GM10248 (cell line): ENCODE measurements at regions of chr1 and their contacts with region 1.

Region 1: GRCh38 chr1:145720877-145721671 is 1.8 kb downstream of the CD160 start:
- DNase-seq: peak; percentile 82
- CTCF ChIP-seq: peak; percentile 93

Region 2: DNA sequence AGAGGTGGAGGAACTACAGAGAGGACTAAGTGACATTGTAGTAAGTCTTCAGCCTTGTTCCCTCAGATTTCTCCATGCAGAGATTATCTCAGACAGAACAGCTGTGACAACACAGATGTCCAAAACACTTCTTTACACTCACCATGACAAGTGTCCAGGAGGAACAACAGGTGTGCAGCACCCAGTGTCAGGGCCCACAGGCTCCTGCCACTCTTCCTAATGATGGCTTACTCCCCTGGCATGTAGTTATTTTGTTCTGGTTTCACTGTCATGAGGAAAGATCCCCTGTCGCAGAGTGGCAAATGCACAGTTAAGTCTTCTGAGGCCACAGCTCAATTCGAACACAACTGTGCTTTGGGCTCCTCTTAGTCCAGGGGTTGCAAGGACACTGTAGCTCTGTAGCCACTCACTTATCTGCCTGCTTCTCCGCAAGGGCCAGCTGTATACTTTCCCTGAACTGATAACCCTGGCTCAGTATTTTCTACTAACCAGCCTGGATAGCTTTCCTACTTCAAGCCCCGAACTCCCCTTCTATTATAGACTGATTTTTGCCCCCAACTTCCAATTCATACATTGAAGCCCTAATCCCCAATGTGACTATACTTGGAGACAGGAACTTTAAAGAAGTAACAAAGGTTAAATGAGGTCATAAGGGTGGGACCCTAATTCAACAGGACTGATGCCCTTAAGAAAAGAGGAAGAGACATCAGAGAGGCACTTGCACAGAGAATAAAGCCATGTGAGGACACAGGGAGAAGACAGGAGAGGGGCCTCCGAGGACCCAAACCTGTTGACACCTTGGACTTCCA is 25.0 kb before region 1 on chr1:
- CTCF ChIA-PET with region 1: interaction called, 14 read pairs
- POLR2A ChIA-PET with region 1: no interaction called
- DNase-seq: no peak
- CTCF ChIP-seq: no peak

Region 3: DNA sequence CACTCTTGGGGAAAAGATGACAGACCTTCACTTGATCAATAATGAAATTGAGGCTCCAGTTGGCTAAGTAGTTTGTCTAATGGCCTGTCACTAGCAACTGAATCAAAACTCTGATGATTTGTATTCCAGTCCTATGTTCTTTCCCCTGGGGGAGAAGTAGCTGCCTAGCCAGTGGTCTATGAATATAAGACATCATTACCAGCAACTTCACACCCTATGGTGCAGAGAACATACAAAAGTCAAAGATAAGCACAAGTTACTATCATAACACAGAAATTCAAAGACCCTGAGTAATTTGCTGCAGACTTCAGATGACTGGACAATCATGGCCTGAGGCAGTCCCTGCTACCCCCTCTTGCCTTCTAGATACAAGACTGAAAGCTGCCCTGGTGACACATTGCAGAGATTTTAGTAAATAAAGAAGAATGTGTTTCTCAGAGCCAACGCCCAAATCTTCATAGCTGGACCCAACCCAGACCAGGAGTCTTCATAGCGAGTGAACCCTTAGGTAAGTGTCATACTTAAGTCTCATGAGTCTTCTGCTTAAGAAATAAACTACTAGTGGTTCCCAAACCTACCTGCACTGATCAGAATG is 14.9 kb before region 1 on chr1:
- CTCF ChIA-PET with region 1: interaction called, 59 read pairs
- POLR2A ChIA-PET with region 1: no interaction called
- DNase-seq: no peak
- CTCF ChIP-seq: no peak

Region 4: GRCh38 chr1:145736191-145736590 is 15.1 kb after region 1 on chr1:
- CTCF ChIA-PET with region 1: interaction called, 39 read pairs
- POLR2A ChIA-PET with region 1: no interaction called
- DNase-seq: no peak
- CTCF ChIP-seq: no peak

Region 5: DNA sequence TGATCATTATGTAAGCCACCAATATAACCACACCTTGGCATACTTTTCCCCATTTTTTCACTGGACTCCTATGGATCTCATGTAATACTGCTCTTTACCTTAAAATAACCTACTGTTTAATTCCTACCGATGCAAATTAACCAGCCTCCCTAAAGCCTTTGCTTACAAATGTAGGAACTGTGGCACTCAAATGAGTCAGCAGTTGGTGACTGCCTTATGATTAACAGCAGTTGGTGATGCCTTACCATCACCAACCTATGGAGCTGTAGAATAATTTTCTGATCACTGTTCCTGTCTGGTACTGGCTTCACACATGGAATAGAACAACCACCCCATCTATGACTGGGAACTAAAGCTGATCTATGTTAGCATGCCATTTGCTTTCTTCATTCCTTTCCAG is 116.6 kb after region 1 on chr1:
- CTCF ChIA-PET with region 1: no interaction called
- POLR2A ChIA-PET with region 1: no interaction called
- DNase-seq: no peak
- CTCF ChIP-seq: no peak

Region 6: DNA sequence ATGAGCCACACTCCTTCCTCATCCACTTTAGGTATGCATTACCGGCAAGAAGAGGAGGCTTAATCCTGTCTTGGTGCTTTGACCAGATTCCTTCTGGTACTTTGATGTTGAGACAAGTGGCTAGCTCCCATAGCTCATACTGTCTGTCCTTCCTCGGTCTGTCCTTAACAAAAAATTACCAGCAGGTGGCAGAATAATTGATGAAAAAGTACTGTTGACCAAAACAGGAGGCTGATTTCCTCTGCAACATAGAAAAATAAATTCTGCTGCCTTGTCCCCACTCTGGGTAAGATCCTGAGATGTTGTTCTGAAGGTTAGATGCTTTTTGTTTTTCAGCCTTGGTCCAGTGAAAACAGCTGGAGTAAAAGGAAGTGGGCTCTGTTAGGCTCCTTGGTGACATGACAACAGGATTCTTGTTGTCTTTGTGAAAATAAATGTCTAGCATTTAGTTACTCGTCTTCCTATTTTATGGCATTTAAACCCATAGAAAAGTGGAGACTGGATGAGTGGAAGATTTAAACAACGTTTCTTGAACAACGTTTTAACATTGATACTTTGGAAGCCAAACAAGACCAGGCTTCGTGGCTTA is 311.7 kb after region 1 on chr1:
- CTCF ChIA-PET with region 1: no interaction called
- POLR2A ChIA-PET with region 1: no interaction called
- DNase-seq: peak; percentile 45
- CTCF ChIP-seq: peak; percentile 47